CD8-positive, alpha-beta T cell (primary cell): ENCODE measurements at regions of chr1 and their contacts with region 1.

Region 1: GRCh38 chr1:119859647-119860046 is 36.7 kb downstream of the ADAM30 start:
- DNase-seq: peak in 1 of 9 experiments; percentile 5
- ATAC-seq: no peak
- H3K4me3 ChIP-seq: no peak overlapping the region
- H3K4me3 Mint-ChIP-seq: no peak overlapping the region
- H3K27ac ChIP-seq: no peak overlapping the region
- H3K27ac Mint-ChIP-seq: no peak overlapping the region
- H3K4me1 ChIP-seq: no peaks in the 10 kb centered on the region
- H3K4me1 Mint-ChIP-seq: peaks cover 6% of the 10 kb centered on the region
- H3K27me3 ChIP-seq: no peaks in the 10 kb centered on the region
- H3K27me3 Mint-ChIP-seq: peaks cover 2% of the 10 kb centered on the region
- CTCF ChIP-seq: no peak

Region 2: GRCh38 chr1:119840745-119841144 is 18.9 kb before region 1 on chr1:
- CTCF ChIA-PET with region 1: no interaction called
- POLR2A ChIA-PET with region 1: no interaction called
- intact Hi-C with region 1: loop called in 1 of 2 experiments (anchors 2 kb)
- DNase-seq: no peak
- ATAC-seq: no peak
- H3K4me3 ChIP-seq: no peak overlapping the region
- H3K4me3 Mint-ChIP-seq: no peak overlapping the region
- H3K27ac ChIP-seq: no peak overlapping the region
- H3K27ac Mint-ChIP-seq: no peak overlapping the region
- H3K4me1 ChIP-seq: no peaks in the 10 kb centered on the region
- H3K4me1 Mint-ChIP-seq: no peaks in the 10 kb centered on the region
- H3K27me3 ChIP-seq: no peaks in the 10 kb centered on the region
- H3K27me3 Mint-ChIP-seq: peaks cover 3% of the 10 kb centered on the region
- CTCF ChIP-seq: no peak